ENCODE measurements at regions of chr1 and their contacts with region 1.

Region 1: GRCh38 chr1:65230731-65231481 is 78.4 kb upstream of the DNAJC6 start:
- DNase-seq: no peak
- H3K4me3 Mint-ChIP-seq: peak overlapping the region; percentile 71
- H3K27ac Mint-ChIP-seq: peak overlapping the region; percentile 93
- H3K4me1 Mint-ChIP-seq: peaks cover 28% of the 10 kb centered on the region
- H3K27me3 Mint-ChIP-seq: no peaks in the 10 kb centered on the region

Region 2: GRCh38 chr1:65213271-65214023 is 17.5 kb before region 1 on chr1:
- intact Hi-C with region 1: loop called (anchors 1 kb)
- DNase-seq: peak; percentile 63
- H3K4me3 Mint-ChIP-seq: peak overlapping the region; percentile 72
- H3K27ac Mint-ChIP-seq: peak overlapping the region; percentile 93
- H3K4me1 Mint-ChIP-seq: peaks cover 69% of the 10 kb centered on the region
- H3K27me3 Mint-ChIP-seq: no peaks in the 10 kb centered on the region

Region 3: DNA sequence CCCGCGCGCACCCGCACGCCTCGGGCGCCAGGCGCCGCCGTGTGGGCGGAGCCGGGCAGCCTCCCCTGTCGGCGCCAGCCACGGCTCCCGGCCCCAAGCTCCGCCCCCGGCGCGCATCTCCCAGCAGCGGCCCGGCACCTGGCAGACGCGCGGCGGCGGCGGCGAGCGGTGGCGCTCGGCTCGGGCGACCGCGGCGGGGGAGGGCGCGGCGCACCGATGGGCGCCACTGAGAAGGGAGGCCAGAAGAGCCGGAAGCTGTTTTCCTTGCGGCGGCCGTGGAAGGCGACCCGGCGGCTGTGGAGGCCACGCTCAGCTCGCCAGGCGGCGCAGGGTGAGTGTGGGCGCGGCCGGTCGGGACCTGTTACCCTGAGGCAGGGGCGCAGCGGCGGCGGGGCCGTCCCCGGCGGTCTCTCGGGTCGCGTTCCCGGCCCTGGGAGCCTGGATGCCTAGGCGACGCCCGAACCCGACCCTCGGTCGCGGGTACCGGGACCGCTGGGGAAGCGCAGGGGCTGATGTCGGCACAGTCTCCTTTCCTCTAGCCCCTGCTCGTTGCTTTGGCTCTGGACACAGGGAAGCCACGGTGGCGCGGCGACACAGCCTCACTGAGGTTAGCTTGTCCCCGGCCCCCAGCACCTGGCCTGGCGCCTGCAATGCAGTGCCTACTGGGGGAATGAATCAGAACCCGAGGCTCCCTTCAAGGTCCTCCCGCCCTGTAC is 23.6 kb after region 1 on chr1:
- intact Hi-C with region 1: loop called (anchors 2 kb)
- DNase-seq: peak; percentile 97
- H3K4me3 Mint-ChIP-seq: peak overlapping the region; percentile 95
- H3K27ac Mint-ChIP-seq: peak overlapping the region; percentile 79
- H3K4me1 Mint-ChIP-seq: peaks cover 21% of the 10 kb centered on the region
- H3K27me3 Mint-ChIP-seq: peaks cover 37% of the 10 kb centered on the region